Heart left ventricle (tissue), 16 donors: ENCODE measurements at regions of chr9 and their contacts with region 1.

Region 1: DNA sequence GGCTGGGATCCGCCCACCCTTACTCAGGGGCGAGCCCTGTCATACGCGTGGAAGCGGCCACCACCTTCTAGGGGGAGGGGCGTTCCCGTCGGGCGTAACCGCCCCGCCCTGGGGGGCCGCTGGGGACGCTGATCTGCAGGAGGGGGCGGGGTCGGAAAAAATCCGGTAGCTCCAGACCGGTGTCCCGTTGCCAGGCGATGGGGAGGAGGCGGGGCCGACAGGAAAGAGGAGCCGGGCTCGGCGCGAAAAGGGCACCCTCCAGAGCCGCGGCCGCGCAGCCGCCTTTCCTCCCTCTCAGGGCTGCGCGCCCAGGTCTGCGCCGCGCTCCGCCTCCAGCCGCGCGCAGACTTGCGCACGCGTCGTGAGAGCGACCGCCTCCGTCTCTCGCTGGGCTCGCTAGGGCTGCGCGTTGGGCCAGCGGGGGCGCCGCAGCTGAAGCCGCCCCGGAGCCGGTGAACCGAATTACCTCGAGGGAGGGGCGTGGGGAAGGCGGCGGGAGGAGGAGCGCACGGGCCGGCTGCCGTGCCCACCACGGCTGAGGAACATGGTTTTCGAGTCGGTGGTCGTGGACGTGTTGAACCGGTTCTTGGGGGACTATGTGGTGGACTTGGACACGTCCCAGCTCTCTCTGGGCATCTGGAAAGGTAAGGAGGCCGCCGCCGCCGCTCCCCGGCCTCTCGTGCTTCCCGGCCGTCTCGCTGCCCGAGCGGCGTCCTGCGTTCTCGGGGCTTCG is at the start of gene VPS13A:
- DNase-seq: peak; percentile 93 to 96 (median 94)
- ATAC-seq: peak; percentile 92 to 96 (median 94)
- H3K4me3 ChIP-seq: peak within 1 kb of the TSS; percentile 58 to 93 (median 81)
- H3K27ac ChIP-seq: peak within 1 kb of the TSS; percentile 72 to 91 (median 86)
- H3K4me1 ChIP-seq: peaks cover 0 to 29% (median 16%) of the 10 kb centered on the region in 12 donors
- H3K27me3 ChIP-seq: no peaks in the 10 kb centered on the region
- CTCF ChIP-seq: peak in 6 of 12 donors; percentile 11 to 59 (median 28)
- POLR2A ChIP-seq: peak in 1 of 2 donors; percentile 80
- total RNA-seq, gene VPS13A: 26.1 to 42.2 (median 32.4) TPM

Region 2: GRCh38 chr9:77328102-77328501 is 150.8 kb after region 1 on chr9:
- intact Hi-C with region 1: loop called in 1 of 10 experiments (anchors 10 kb)
- DNase-seq: no peak
- ATAC-seq: no peak
- H3K4me3 ChIP-seq: no peak overlapping the region
- H3K27ac ChIP-seq: no peak overlapping the region
- H3K4me1 ChIP-seq: no peaks in the 10 kb centered on the region
- H3K27me3 ChIP-seq: no peaks in the 10 kb centered on the region
- CTCF ChIP-seq: no peak
- POLR2A ChIP-seq: no peak

Region 3: GRCh38 chr9:78235756-78236538 is 1058.6 kb after region 1 on chr9 and contains the start of gene CEP78:
- intact Hi-C with region 1: loop called in 1 of 10 experiments (anchors 10 kb)
- DNase-seq: peak; percentile 91 to 95 (median 94)
- ATAC-seq: peak; percentile 93 to 100 (median 100)
- H3K4me3 ChIP-seq: peak within 1 kb of the TSS; percentile 65 to 97 (median 76)
- H3K27ac ChIP-seq: peak within 1 kb of the TSS in 11 of 12 donors; percentile 31 to 89 (median 66)
- H3K4me1 ChIP-seq: peaks cover 0 to 20% (median 2%) of the 10 kb centered on the region in 12 donors
- H3K27me3 ChIP-seq: no peaks in the 10 kb centered on the region
- CTCF ChIP-seq: no peak
- POLR2A ChIP-seq: peak in 1 of 2 donors; percentile 64
- total RNA-seq, gene CEP78: 1.9 to 8.2 (median 3.4) TPM